Activated naive CD4-positive, alpha-beta T cell treated with anti-CD3 and anti-CD28 coated beads for 36 hours (primary cell): ENCODE measurements at regions of chr21 and their contacts with region 1.

Region 1: GRCh38 chr21:26070822-26071425 is 99.6 kb downstream of the APP start:
- DNase-seq: peak; percentile 52
- H3K4me3 Mint-ChIP-seq: peak overlapping the region; percentile 69
- H3K27ac Mint-ChIP-seq: peak overlapping the region; percentile 70
- H3K4me1 Mint-ChIP-seq: peaks cover 52% of the 10 kb centered on the region
- H3K27me3 Mint-ChIP-seq: no peaks in the 10 kb centered on the region

Region 2: GRCh38 chr21:24545807-24546361 is 1525.0 kb before region 1 on chr21:
- CTCF ChIA-PET with region 1: no interaction called
- intact Hi-C with region 1: no loop called
- DNase-seq: no peak
- H3K4me3 Mint-ChIP-seq: no peak overlapping the region
- H3K27ac Mint-ChIP-seq: no peak overlapping the region
- H3K4me1 Mint-ChIP-seq: no peaks in the 10 kb centered on the region
- H3K27me3 Mint-ChIP-seq: no peaks in the 10 kb centered on the region

Region 3: GRCh38 chr21:25759573-25759972 is 311.4 kb before region 1 on chr21:
- CTCF ChIA-PET with region 1: no interaction called
- intact Hi-C with region 1: no loop called
- DNase-seq: no peak
- H3K4me3 Mint-ChIP-seq: no peak overlapping the region
- H3K27ac Mint-ChIP-seq: peak overlapping the region; percentile 36
- H3K4me1 Mint-ChIP-seq: peaks cover 21% of the 10 kb centered on the region
- H3K27me3 Mint-ChIP-seq: no peaks in the 10 kb centered on the region

Region 4: GRCh38 chr21:25956993-25957714 is 113.8 kb before region 1 on chr21:
- CTCF ChIA-PET with region 1: no interaction called
- intact Hi-C with region 1: no loop called
- DNase-seq: no peak
- H3K4me3 Mint-ChIP-seq: no peak overlapping the region
- H3K27ac Mint-ChIP-seq: no peak overlapping the region
- H3K4me1 Mint-ChIP-seq: no peaks in the 10 kb centered on the region
- H3K27me3 Mint-ChIP-seq: no peaks in the 10 kb centered on the region

Region 5: GRCh38 chr21:25967573-25968438 is 103.1 kb before region 1 on chr21:
- CTCF ChIA-PET with region 1: no interaction called
- intact Hi-C with region 1: loop called (anchors 5 kb)
- DNase-seq: peak; percentile 16
- H3K4me3 Mint-ChIP-seq: no peak overlapping the region
- H3K27ac Mint-ChIP-seq: peak overlapping the region; percentile 58
- H3K4me1 Mint-ChIP-seq: peaks cover 9% of the 10 kb centered on the region
- H3K27me3 Mint-ChIP-seq: no peaks in the 10 kb centered on the region

Region 6: DNA sequence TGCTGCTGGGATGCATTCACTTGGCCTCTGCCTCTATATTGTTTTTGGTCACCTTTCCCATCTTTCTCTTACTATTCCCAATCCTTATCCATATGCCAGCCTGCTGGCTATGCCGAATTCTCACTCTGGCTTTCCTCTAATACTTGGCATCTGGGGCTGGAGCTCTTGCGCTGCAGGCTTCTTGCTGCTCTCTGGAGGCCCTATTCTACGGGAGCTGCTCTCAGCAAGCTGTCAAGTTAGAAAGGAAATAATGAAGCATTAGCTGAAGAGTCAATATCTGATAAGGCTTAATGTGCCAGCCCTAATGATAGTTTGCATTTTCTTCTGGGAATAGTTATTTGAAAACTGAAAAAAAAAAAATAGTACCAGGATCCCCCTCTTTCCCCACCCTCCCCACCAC is 627.5 kb after region 1 on chr21:
- CTCF ChIA-PET with region 1: no interaction called
- intact Hi-C with region 1: no loop called
- DNase-seq: no peak
- H3K4me3 Mint-ChIP-seq: no peak overlapping the region
- H3K27ac Mint-ChIP-seq: no peak overlapping the region
- H3K4me1 Mint-ChIP-seq: no peaks in the 10 kb centered on the region
- H3K27me3 Mint-ChIP-seq: peaks cover 9% of the 10 kb centered on the region